ENCODE measurements at regions of chr2 and their contacts with region 1.

Region 1: GRCh38 chr2:178397002-178397605 is 53.9 kb downstream of the PRKRA start:
- DNase-seq: no peak
- H3K4me3 ChIP-seq: no peak overlapping the region
- H3K27me3 ChIP-seq: no peaks in the 10 kb centered on the region
- CTCF ChIP-seq: peak; percentile 68

Region 2: DNA sequence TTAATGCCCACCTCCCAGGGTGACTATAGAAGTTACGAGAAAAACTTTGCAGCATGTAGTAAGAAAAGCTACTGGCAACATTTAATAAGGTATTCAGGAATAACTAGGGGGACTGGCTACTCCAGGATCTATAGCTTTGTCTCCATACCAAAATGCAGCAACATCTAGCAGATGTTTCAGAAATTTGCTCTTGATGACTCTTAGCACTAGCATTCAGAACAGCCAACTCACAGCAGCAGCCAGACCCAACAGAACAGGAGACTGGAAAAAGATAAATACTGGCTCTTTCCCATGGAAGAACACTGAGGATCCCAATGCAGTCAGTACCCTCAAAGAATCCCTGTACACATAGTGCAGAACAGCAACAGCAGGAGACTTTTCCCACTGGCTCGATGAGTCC is 51.2 kb before region 1 on chr2:
- CTCF ChIA-PET with region 1: interaction called, 4 read pairs
- POLR2A ChIA-PET with region 1: interaction called, 13 read pairs
- DNase-seq: no peak
- H3K4me3 ChIP-seq: no peak overlapping the region
- H3K27me3 ChIP-seq: no peaks in the 10 kb centered on the region
- CTCF ChIP-seq: no peak